ENCODE measurements at regions of chr10 and their contacts with region 1.

Region 1: GRCh38 chr10:52818019-52818418 is 45.4 kb upstream of the MBL2 start:
- DNase-seq: peak; percentile 100
- ATAC-seq: peak; percentile 82
- H3K4me3 ChIP-seq: no peak overlapping the region
- H3K27ac ChIP-seq: no peak overlapping the region
- H3K4me1 ChIP-seq: peaks cover 21% of the 10 kb centered on the region
- H3K27me3 ChIP-seq: no peaks in the 10 kb centered on the region
- CTCF ChIP-seq: peak; percentile 100

Region 2: DNA sequence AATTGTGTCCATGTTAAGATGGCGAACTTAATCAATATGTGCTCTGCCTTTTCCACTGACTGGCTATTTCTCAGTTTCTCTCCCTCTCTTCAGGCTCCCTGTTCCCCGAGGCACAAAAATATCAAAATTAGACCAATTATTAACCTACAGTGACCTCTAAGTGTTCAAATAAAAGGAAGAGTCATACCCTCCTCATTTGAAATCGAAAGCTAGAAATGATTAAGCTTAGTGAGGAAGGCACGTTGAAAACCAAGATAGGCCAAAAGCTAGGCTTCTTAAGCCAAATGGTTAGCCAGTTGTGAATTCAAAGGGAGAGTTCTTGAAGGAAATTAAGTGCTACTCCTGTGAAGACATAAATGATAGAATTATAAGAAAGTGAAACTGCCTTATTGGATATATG is 35.7 kb after region 1 on chr10:
- CTCF ChIA-PET with region 1: interaction called, 7 read pairs
- POLR2A ChIA-PET with region 1: no interaction called
- intact Hi-C with region 1: loop called (anchors 1 kb)
- DNase-seq: no peak
- ATAC-seq: no peak
- H3K4me3 ChIP-seq: no peak overlapping the region
- H3K27ac ChIP-seq: no peak overlapping the region
- H3K4me1 ChIP-seq: no peaks in the 10 kb centered on the region; the same call in 1 of the 2 replicates
- H3K27me3 ChIP-seq: no peaks in the 10 kb centered on the region
- CTCF ChIP-seq: no peak

Region 3: GRCh38 chr10:52951824-52952223 is 133.8 kb after region 1 on chr10:
- CTCF ChIA-PET with region 1: interaction called, 64 read pairs
- POLR2A ChIA-PET with region 1: no interaction called
- intact Hi-C with region 1: loop called (anchors 1 kb)
- DNase-seq: peak; percentile 97
- ATAC-seq: peak; percentile 44
- H3K4me3 ChIP-seq: no peak overlapping the region
- H3K27ac ChIP-seq: no peak overlapping the region
- H3K4me1 ChIP-seq: peaks cover 24% of the 10 kb centered on the region
- H3K27me3 ChIP-seq: no peaks in the 10 kb centered on the region
- CTCF ChIP-seq: peak; percentile 99

Region 4: GRCh38 chr10:53102424-53102823 is 284.4 kb after region 1 on chr10:
- CTCF ChIA-PET with region 1: interaction called, 3 read pairs
- POLR2A ChIA-PET with region 1: no interaction called
- intact Hi-C with region 1: loop called (anchors 5 kb)
- DNase-seq: peak; percentile 90
- ATAC-seq: peak; percentile 99
- H3K4me3 ChIP-seq: no peak overlapping the region
- H3K27ac ChIP-seq: no peak overlapping the region
- H3K4me1 ChIP-seq: peaks cover 13% of the 10 kb centered on the region
- H3K27me3 ChIP-seq: no peaks in the 10 kb centered on the region
- CTCF ChIP-seq: no peak

Region 5: DNA sequence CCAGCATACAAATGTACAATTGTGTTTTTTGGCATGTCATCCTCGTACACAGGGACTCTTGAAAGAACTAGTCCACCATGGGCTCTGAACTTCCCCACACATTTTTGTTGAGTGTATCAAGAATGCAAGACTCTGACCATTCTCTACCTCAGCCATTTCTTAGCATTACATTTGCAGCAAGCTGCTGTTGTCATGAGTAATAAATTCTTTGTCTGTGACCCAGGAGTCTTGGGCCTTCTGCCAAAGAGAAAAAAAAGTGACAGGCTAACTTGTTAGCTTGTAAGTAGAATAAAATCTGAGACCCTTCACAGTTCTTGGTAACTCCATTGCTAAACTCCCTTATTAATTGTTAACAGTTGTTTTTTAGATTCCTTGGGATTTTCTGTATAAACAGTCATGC is 496.9 kb after region 1 on chr10:
- CTCF ChIA-PET with region 1: interaction called, 18 read pairs
- POLR2A ChIA-PET with region 1: no interaction called
- intact Hi-C with region 1: loop called (anchors 1 kb)
- DNase-seq: peak; percentile 100
- ATAC-seq: peak; percentile 97
- H3K4me3 ChIP-seq: no peak overlapping the region
- H3K27ac ChIP-seq: no peak overlapping the region
- H3K4me1 ChIP-seq: peaks cover 14% of the 10 kb centered on the region
- H3K27me3 ChIP-seq: no peaks in the 10 kb centered on the region
- CTCF ChIP-seq: no peak

Region 6: DNA sequence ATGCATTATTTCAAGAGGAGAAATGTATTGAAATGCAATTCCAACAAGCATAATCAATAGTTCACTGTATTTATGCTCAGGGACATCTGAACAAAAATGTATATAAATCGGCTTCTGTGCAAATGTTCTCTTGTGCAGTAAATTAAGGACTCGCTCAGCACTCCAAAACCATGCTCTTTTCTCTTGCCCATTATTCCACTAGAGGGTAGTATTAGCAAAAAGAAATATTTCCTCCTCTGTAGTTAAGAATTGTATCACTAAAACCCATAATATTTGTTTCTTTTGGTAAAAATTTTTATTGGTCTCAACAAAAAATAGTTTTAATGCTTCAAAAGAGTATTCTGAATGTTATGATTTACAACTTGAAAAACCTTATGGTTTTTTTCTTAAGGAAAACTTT is 1179.9 kb after region 1 on chr10:
- CTCF ChIA-PET with region 1: no interaction called
- POLR2A ChIA-PET with region 1: no interaction called
- intact Hi-C with region 1: loop called (anchors 10 kb)
- DNase-seq: peak; percentile 60
- ATAC-seq: peak; percentile 93
- H3K4me3 ChIP-seq: no peak overlapping the region
- H3K27ac ChIP-seq: no peak overlapping the region
- H3K4me1 ChIP-seq: no peaks in the 10 kb centered on the region
- H3K27me3 ChIP-seq: no peaks in the 10 kb centered on the region
- CTCF ChIP-seq: peak; percentile 87

Measured in PC-3 (cell line).